ENCODE measurements at regions of chr2 and their contacts with region 1.

Region 1: DNA sequence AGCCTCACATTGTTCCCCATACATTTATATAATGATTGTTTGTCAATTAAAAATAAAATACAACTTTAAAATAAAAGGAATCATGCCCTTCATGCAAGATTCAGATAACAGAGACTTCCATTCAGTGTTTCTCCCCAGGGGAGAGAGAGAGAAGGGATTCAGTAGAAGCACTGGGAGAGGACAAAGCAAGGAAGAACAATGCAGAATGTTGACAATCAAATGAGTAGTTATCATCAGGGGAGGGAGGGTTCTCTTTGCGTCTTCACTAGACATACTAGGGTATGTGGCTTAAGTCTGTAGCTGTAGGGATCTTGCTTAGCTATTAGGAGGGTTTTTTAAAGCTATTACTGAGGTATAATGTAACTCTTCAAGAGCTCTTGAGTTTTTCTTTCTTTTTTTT is 30.7 kb downstream of the FSHR start:
- DNase-seq: no peak

Region 2: DNA sequence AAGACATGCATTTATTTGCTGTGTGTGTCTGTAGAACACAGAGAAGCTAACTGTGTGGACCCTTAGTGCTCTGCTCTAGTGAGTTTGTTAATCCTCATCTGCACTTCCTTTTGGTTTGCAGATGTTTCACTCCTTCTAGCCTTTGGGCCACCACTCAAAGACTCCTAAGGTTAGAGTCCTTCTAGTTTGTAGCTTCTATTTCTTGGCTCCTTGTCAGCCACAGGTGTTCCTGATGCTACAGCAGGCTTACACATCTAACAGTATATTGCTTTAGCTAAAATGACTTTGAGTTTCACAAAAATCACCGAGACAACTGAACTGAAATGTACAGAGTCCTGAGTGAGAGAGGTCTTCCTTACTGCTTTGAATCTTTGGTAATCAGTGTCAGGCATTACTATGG is 1356.9 kb after region 1 on chr2:
- intact Hi-C with region 1: loop called in 1 of 2 experiments (anchors 5 kb)
- DNase-seq: no peak